WTC11 (cell line): ENCODE measurements at regions of chr7 and their contacts with region 1.

Region 1: DNA sequence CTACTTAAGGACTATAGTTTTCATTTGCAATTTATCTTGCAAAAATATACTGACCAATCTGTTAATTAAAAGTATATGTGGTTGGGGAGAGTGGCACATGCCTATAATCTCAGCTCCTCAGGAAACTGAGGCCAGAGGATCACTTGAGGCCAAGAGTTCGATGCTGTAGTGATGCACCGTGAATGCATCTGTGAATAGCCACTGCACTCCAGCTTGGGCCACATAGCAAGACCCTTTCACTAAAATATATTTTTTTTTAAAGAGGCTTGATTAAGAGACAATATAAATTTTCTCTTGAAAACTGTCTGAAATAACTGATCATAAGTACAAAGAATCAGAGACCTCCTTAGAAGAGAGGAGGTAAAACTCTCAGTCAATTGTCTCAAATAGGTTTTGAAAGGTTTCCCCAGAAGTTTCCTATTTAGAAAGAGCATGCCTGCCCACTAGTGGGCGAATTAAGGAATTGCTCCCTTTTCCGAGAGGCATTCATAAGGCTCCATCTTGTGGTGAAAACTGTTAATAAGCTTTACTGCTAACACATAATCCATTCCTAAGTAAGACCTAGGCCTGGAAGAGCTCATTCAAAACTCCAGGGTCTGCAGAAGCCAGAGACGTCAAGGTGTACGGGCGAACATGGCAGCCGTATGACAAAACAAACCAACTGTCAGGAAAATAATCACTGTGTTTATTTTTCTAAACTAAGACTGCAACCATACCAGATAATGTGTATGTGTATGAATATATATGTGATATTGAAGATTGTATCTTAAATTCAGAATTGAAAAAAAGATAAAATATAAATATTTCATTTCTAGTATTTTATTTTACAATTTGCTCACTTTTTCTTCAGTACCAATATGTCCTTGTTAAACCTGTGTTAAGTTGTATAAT is 6.8 kb upstream of the TAS2R40 start:
- DNase-seq: peak; percentile 44
- ATAC-seq: peak; percentile 99
- H3K4me3 Mint-ChIP-seq: no peak overlapping the region
- H3K27ac Mint-ChIP-seq: no peak overlapping the region
- H3K4me1 Mint-ChIP-seq: no peaks in the 10 kb centered on the region
- H3K27me3 Mint-ChIP-seq: no peaks in the 10 kb centered on the region
- CTCF ChIP-seq: peak; percentile 99

Region 2: DNA sequence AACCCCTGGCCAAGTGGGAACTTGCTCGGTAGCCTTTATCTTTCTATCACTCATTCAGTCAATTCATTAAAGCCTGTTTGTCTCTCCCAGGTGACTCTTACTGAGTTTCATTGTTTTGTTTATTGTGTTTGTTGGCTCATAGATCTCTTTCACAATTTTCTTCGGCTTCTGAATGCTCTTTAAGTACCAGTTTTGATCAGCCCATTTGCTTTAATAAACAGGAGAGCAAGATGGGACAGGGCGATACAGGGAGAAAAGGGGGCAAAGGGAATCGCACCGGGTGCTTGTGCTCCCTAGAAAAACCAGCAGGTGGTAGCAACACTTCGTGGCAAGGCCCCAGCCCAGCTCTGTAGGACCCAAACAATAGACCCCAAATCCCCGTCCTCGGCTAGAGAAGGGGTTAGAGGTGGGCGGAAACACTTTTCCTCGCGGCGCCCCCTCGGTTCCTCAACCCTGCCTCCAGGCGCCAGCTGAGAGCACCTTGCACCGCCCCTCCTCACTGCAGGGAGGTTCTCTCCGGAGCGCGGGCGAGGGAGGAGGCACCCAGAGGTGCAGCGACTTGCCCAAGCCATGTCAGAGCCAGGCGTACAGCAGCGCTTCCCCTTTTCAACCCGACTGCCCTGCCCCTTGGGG is 361.2 kb before region 1 on chr7:
- CTCF ChIA-PET with region 1: interaction called, 22 read pairs
- POLR2A ChIA-PET with region 1: no interaction called
- DNase-seq: peak; percentile 70
- ATAC-seq: peak; percentile 69
- H3K4me3 Mint-ChIP-seq: peak overlapping the region; percentile 94
- H3K27ac Mint-ChIP-seq: no peak overlapping the region
- H3K4me1 Mint-ChIP-seq: peaks cover 29% of the 10 kb centered on the region
- H3K27me3 Mint-ChIP-seq: peaks cover 17% of the 10 kb centered on the region
- CTCF ChIP-seq: no peak

Region 3: DNA sequence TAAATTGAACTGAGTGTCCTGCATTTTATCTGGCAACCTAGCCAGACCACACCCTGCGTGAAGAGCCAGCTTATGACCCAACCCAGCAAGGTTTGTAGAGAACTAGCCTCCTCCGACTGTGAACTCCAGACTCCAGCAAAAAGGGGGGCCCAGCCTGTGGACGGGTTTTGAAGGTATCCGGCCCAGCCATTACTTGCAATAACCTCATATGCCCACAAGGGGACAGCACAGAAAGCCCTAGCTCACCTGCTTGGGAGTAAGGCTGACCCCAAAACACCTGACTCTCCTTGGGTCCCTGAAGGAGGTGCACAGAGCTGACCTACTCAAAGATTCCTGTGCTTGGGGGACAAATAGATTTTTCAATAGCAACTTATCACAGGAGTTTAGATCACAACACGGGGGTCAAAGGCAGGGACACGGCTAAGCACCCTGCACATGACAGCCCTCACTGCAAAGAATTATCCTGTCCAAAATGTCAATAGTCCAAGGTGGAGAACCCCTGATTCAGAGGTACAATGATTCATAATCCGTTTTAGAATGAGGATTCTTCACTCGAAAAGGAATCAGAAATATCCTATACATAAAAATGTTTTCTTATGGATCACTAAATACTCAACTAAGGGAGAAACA is 334.0 kb before region 1 on chr7:
- CTCF ChIA-PET with region 1: interaction called, 14 read pairs
- POLR2A ChIA-PET with region 1: no interaction called
- DNase-seq: peak; percentile 72
- ATAC-seq: peak; percentile 72
- H3K4me3 Mint-ChIP-seq: no peak overlapping the region
- H3K27ac Mint-ChIP-seq: no peak overlapping the region
- H3K4me1 Mint-ChIP-seq: peaks cover 6% of the 10 kb centered on the region
- H3K27me3 Mint-ChIP-seq: no peaks in the 10 kb centered on the region; the same call in 1 of the 2 replicates
- CTCF ChIP-seq: peak; percentile 96

Region 4: DNA sequence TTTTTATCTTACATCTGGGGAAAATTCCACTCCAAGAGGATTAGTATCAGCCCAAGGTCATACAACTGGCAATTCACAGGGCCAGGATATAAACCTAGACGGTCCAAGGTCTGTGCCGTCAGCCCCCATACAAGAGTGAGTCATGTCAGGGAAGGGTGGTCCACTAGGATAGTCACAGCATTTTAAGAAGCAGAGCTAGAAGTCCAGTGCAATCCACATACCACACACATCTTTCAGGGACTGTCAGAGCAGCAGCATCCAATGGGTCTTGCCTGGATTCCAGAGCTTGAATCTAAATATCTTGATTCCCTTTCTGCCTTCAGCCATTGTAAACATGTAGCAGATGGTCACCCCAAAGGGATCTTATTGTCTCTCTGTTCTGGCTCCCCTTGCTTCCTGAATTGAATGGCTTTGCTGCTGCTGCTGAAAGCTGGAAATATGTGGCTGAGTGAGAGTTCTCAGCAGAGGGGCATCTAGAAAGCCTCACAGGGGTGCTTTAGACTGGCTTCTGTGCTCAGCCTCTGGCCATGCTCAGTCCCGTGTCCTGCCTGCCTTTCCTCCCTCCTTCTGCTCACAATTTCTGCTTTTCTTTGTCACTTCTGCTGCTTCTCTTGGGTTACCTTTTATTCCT is 172.8 kb before region 1 on chr7:
- CTCF ChIA-PET with region 1: interaction called, 25 read pairs
- POLR2A ChIA-PET with region 1: no interaction called
- DNase-seq: no peak
- ATAC-seq: peak; percentile 51; the same call in 1 of the 2 replicates
- H3K4me3 Mint-ChIP-seq: no peak overlapping the region
- H3K27ac Mint-ChIP-seq: no peak overlapping the region
- H3K4me1 Mint-ChIP-seq: no peaks in the 10 kb centered on the region
- H3K27me3 Mint-ChIP-seq: no peaks in the 10 kb centered on the region
- CTCF ChIP-seq: no peak

Region 5: GRCh38 chr7:143188994-143189393 is 26.0 kb before region 1 on chr7:
- CTCF ChIA-PET with region 1: interaction called, 23 read pairs
- POLR2A ChIA-PET with region 1: no interaction called
- DNase-seq: no peak
- ATAC-seq: peak; percentile 80
- H3K4me3 Mint-ChIP-seq: no peak overlapping the region
- H3K27ac Mint-ChIP-seq: no peak overlapping the region
- H3K4me1 Mint-ChIP-seq: peaks cover 19% of the 10 kb centered on the region
- H3K27me3 Mint-ChIP-seq: no peaks in the 10 kb centered on the region
- CTCF ChIP-seq: no peak

Region 6: DNA sequence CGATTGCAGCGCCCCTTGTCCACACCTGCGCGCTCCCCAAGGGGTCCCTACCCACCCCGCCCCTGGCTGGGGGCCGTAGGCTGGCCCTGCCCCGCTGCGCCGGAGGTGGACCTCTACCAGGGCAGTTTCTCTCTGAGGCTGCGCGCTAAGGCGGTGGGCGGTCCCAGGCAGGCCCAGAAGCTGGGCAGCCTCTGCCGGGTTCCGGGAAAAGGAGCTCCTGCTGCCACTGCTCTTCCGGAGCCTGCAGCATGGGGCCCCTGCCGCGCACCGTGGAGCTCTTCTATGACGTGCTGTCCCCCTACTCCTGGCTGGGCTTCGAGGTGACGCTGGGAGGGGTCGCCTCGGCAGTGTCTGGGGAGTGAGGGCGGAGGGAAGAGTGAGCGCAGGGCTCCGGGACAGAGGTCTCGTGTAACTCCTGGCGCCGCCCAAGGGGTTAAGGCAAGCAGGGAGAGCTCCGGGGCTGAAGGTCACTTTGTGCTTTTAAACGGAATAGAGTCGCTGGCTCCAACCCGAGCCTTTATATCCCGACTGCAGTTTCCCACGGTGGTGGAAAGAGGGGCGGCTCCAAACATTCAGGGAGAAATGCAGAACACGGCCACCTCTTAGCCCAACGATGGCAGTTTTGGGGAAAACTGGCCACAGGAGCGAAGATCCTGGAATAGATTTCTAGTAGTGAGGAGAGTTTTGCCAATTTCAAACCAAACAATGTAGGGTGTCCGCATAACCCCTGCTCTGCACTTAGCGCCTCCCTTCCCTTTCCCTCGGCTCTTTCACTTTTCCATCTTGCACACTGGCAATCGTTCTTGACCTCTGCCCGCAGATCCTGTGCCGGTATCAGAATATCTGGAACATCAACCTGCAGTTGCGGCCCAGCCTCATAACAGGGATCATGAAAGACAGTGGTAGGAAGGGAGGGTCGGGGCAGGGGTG is 48.5 kb after region 1 on chr7 and contains the start of gene GSTK1:
- CTCF ChIA-PET with region 1: interaction called, 12 read pairs
- POLR2A ChIA-PET with region 1: no interaction called
- DNase-seq: peak; percentile 73
- ATAC-seq: peak; percentile 95
- H3K4me3 Mint-ChIP-seq: peak within 1 kb of the TSS; percentile 89
- H3K27ac Mint-ChIP-seq: no peak within 1 kb of the TSS
- H3K4me1 Mint-ChIP-seq: peaks cover 12% of the 10 kb centered on the region
- H3K27me3 Mint-ChIP-seq: peaks cover 14% of the 10 kb centered on the region
- CTCF ChIP-seq: no peak
- total RNA-seq, gene GSTK1: 30.1 to 40.1 TPM (median 37.7 TPM) in 3 replicates

Region 7: GRCh38 chr7:143362131-143363015 is 147.3 kb after region 1 on chr7 and contains the start of gene FAM131B:
- CTCF ChIA-PET with region 1: no interaction called
- POLR2A ChIA-PET with region 1: no interaction called
- DNase-seq: peak; percentile 50
- ATAC-seq: peak; percentile 65
- H3K4me3 Mint-ChIP-seq: peak within 1 kb of the TSS; percentile 92
- H3K27ac Mint-ChIP-seq: no peak within 1 kb of the TSS
- H3K4me1 Mint-ChIP-seq: peaks cover 21% of the 10 kb centered on the region
- H3K27me3 Mint-ChIP-seq: peaks cover 34% of the 10 kb centered on the region
- CTCF ChIP-seq: no peak
- total RNA-seq, gene FAM131B: 24.0 to 26.3 TPM (median 25.3 TPM) in 3 replicates

Region 8: DNA sequence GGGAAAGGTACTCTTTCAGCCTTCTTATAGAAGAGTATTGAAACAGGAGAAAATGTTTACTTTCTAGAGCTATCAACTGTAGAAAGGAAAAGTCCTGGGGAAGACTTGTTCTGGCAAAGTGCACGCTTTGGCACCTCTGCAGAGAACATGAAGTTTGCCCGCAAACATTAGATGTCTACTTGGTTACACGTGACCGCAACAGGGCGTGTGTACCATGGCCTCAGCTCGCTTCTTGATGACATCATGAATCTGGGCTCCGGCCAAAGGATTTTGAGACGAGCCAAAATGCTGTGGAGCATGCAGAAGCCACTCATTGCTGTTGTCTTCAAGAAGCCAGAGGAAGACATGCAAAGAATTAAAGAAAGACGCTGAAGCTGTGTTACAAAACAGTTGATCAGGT is 219.6 kb after region 1 on chr7:
- CTCF ChIA-PET with region 1: no interaction called
- POLR2A ChIA-PET with region 1: no interaction called
- DNase-seq: no peak
- ATAC-seq: no peak
- H3K4me3 Mint-ChIP-seq: no peak overlapping the region
- H3K27ac Mint-ChIP-seq: no peak overlapping the region
- H3K4me1 Mint-ChIP-seq: peaks cover 22% of the 10 kb centered on the region
- H3K27me3 Mint-ChIP-seq: no peaks in the 10 kb centered on the region
- CTCF ChIP-seq: no peak